ENCODE measurements at regions of chr14 and their contacts with region 1.

Region 1: DNA sequence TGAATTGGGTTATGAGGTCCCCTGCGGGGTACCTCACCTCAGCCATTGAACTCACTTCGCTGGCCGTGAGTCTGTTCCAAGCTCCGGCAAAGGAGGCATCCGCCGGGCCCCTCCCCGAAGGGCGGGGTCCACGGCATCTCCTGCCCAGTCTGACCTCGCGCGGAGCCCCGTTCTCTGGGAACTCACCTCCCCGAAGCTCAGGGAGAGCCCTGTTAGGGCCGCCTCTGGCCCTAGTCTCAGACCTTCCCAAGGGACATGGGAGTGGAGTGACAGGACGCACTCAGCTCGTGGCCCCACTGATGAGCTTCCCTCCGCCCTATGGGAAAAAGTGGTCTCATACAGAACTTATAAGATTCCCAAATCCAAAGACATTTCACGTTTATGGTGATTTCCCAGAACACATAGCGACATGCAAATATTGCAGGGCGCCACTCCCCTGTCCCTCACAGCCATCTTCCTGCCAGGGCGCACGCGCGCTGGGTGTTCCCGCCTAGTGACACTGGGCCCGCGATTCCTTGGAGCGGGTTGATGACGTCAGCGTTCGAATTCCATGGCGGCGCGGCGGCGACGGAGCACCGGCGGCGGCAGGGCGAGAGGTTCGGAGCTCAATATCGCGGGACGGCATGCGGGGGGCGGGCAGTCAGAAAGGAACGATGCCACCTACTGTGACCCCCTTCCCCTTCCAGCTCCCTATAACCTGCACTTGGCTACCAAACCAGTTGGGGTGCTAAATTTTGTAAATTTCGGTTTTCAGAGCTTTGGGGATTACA is at the start of gene PARP2:
- DNase-seq: peak; percentile 99
- H3K4me3 ChIP-seq: peak within 1 kb of the TSS; percentile 94
- H3K27me3 ChIP-seq: no peaks in the 10 kb centered on the region
- CTCF ChIP-seq: no peak
- polyA plus RNA-seq, gene PARP2: 8.2 and 13.6 TPM in 2 replicates

Region 2: DNA sequence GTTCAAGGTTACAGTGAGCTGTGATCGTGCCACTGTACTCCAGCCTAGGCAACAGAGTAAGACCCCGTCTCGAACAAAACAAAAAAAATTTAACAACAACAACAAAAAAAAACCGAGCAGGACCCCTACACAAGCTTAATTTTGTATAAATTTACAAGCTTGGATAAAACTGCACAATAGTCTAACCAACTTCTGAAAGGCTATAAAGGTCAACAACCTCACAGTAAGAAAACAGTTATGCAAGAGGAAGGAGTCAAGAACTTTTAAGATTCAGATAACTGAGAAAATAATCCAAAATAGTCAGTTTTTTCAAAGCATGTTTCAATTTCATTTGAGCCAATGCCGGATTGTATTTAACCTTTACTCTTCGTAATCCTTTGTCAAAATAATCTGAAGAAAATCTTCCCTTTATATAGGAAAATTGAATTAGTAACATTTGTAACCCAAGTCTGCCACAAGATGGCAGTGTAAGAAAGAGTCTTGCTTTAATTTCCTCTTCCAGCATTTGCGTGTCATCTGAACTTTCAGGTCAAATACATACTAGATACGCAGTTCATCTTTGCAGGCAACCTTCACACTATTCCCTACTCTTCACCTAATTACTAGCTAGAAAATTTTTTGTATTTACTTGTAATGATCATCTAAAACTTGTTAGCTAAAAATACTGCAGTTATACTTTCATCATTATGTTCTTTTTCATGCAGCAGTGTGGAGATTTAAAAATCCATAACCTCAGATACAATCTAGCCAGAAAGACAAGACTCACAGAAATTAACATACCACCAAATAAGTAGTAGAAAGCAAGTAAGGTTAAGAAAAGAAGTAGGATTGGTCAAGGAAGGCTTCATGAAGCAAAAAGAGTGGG is 16.0 kb before region 1 on chr14:
- CTCF ChIA-PET with region 1: interaction called, 27 read pairs
- POLR2A ChIA-PET with region 1: interaction called, 3 read pairs
- DNase-seq: no peak
- H3K4me3 ChIP-seq: no peak overlapping the region
- H3K27me3 ChIP-seq: no peaks in the 10 kb centered on the region
- CTCF ChIP-seq: peak; percentile 67

Region 3: GRCh38 chr14:20332788-20333493 is 10.3 kb before region 1 on chr14 and contains the start of gene CCNB1IP1:
- CTCF ChIA-PET with region 1: interaction called, 27 read pairs
- POLR2A ChIA-PET with region 1: interaction called, 3 read pairs
- DNase-seq: peak; percentile 73
- H3K4me3 ChIP-seq: peak within 1 kb of the TSS; percentile 66
- H3K27me3 ChIP-seq: no peaks in the 10 kb centered on the region
- CTCF ChIP-seq: no peak
- polyA plus RNA-seq, gene CCNB1IP1: 41.0 and 69.8 TPM in 2 replicates

Measured in BJ (cell line).